IMR-90 (cell line): ENCODE measurements at regions of chr7 and their contacts with region 1.

Region 1: DNA sequence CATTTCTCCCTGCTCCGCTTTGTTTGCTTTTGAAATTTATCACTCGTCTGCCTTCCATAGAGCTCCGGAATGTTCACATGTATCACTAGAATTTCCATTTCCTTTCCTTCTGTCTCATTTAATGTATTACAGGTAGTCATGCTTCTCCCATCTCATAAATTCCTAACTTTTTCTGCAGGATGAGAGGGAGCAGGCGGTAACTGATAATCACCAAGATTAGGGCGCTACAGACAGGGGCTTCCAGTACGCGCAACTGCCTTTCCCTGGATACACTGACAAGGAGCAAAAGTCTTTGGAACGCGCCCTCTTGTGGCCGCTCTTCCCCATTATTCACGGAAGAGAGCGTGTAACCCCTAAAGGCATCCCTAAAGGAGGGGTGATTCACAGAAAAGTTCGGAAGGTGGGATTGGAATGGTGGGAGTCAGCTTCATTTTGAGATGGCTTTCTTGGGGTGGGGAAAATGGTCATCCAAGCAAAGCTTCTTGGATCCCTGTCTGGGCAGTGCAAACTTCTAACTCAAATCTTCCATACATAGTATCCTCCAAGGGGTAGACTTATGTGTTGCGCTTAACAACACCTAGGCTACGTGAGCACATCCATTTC is 6.5 kb downstream of the INHBA start:
- DNase-seq: peak; percentile 88
- ATAC-seq: peak; percentile 42
- H3K4me3 ChIP-seq: peak overlapping the region; percentile 91
- H3K27ac ChIP-seq: peak overlapping the region; percentile 91
- H3K4me1 ChIP-seq: peaks cover 27% of the 10 kb centered on the region
- H3K27me3 ChIP-seq: no peaks in the 10 kb centered on the region
- CTCF ChIP-seq: peak; percentile 72
- POLR2A ChIP-seq: peak; percentile 17; the same call in 1 of the 2 replicates
- RAD21 ChIP-seq: peak; percentile 73

Region 2: DNA sequence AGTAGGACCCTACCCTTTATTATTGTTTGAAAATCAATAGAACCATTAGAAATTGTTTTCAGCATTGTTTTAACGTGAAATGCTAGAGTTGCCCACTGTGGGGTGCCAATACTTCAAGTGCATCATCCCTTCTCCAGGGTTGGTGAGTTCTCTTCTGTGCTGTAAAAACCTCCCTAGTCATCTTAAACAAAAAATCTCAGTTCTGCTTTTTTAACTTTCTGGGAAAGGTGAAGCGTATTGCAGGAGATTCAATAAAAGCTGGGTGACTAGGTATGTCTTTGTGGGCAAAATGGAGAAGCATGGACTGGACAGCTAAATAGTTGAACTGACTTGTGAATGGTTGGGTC is 862.6 kb before region 1 on chr7:
- CTCF ChIA-PET with region 1: no interaction called
- POLR2A ChIA-PET with region 1: no interaction called
- dilution Hi-C with region 1: no loop called
- in situ Hi-C with region 1: no loop called
- intact Hi-C with region 1: loop called (anchors 2 kb)
- DNase-seq: peak; percentile 55
- ATAC-seq: peak; percentile 80
- H3K4me3 ChIP-seq: no peak overlapping the region
- H3K27ac ChIP-seq: no peak overlapping the region
- H3K4me1 ChIP-seq: 0 out of 2 replicates have a peak, but pooled peaks cover 4% of the 10 kb centered on the region
- H3K27me3 ChIP-seq: no peaks in the 10 kb centered on the region
- CTCF ChIP-seq: peak; percentile 50
- POLR2A ChIP-seq: no peak
- RAD21 ChIP-seq: peak; percentile 65

Region 3: GRCh38 chr7:41029072-41029499 is 667.3 kb before region 1 on chr7:
- CTCF ChIA-PET with region 1: no interaction called
- POLR2A ChIA-PET with region 1: no interaction called
- dilution Hi-C with region 1: no loop called
- in situ Hi-C with region 1: no loop called
- intact Hi-C with region 1: loop called (anchors 5 kb)
- DNase-seq: peak; percentile 100
- ATAC-seq: peak; percentile 68
- H3K4me3 ChIP-seq: no peak overlapping the region
- H3K27ac ChIP-seq: peak overlapping the region; percentile 11; the same call in 1 of the 2 replicates
- H3K4me1 ChIP-seq: peaks cover 13% of the 10 kb centered on the region
- H3K27me3 ChIP-seq: no peaks in the 10 kb centered on the region
- CTCF ChIP-seq: no peak
- POLR2A ChIP-seq: no peak
- RAD21 ChIP-seq: peak; percentile 34

Region 4: DNA sequence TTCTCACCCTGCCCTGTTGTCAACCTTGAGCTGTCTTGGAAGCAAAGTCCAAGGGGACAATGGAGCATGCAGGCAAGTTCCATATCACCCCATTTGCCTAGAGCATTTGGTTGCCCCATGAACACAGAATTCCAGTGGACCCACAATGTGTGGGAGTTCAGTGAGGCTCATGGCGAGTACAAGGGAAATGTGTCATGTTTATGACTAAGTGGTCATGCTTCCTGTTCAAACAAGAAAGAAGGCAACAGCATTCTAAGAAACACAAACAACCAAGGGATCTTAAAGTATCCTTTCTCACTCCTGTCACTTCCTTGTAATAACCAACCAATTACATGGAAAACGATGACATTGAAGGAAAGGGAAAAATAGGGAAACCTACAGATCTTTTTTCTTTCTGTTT is 506.5 kb before region 1 on chr7:
- CTCF ChIA-PET with region 1: no interaction called
- POLR2A ChIA-PET with region 1: no interaction called
- dilution Hi-C with region 1: no loop called
- in situ Hi-C with region 1: no loop called
- intact Hi-C with region 1: loop called (anchors 10 kb)
- DNase-seq: peak; percentile 97
- ATAC-seq: peak; percentile 84
- H3K4me3 ChIP-seq: no peak overlapping the region
- H3K27ac ChIP-seq: peak overlapping the region; percentile 54; the same call in 1 of the 2 replicates
- H3K4me1 ChIP-seq: peaks cover 14% of the 10 kb centered on the region
- H3K27me3 ChIP-seq: no peaks in the 10 kb centered on the region
- CTCF ChIP-seq: no peak
- POLR2A ChIP-seq: no peak
- RAD21 ChIP-seq: peak; percentile 26; the same call in 1 of the 2 replicates

Region 5: GRCh38 chr7:41374150-41374848 is 322.1 kb before region 1 on chr7:
- CTCF ChIA-PET with region 1: no interaction called
- POLR2A ChIA-PET with region 1: no interaction called
- dilution Hi-C with region 1: no loop called
- in situ Hi-C with region 1: no loop called
- intact Hi-C with region 1: loop called (anchors 5 kb)
- DNase-seq: no peak
- ATAC-seq: no peak
- H3K4me3 ChIP-seq: no peak overlapping the region
- H3K27ac ChIP-seq: no peak overlapping the region
- H3K4me1 ChIP-seq: peaks cover 2% of the 10 kb centered on the region; the same call in 1 of the 2 replicates
- H3K27me3 ChIP-seq: no peaks in the 10 kb centered on the region
- CTCF ChIP-seq: no peak
- POLR2A ChIP-seq: no peak
- RAD21 ChIP-seq: no peak